ENCODE measurements at regions of chr2 and their contacts with region 1.

Region 1: DNA sequence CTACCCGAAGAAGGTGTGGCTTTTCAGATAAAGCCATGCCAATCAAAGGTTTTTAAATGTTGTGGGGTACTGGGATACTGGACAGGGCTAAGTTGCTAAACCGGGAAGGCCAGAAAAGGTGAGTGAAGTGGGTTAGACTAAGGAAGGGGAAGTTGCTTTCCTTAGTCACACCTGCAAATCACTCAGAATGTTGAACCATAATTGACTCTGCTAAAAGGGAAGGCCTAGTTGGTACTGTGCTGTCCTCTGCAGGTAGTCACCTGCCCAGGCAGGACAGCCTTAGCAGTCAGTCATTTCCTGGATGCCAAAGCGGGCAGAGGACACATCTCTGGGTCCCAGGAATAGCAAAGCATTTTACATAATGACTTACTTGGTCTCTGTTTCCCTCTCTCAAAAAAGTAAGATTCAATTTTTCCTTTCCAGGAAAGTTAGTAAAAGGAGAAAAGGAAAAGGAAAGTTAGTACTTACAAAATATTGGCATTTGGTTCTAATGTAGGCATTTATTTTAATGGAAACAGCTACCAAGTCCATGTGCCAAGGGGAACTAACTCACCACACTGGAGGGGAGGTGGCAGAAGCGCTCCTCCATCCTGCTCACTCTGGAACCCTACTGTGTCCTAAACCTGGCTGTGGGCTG is 60.3 kb downstream of the RFTN2 start:
- DNase-seq: no peak
- H3K4me3 ChIP-seq: no peak overlapping the region
- H3K27ac ChIP-seq: peak overlapping the region; percentile 17
- H3K4me1 ChIP-seq: peaks cover 16% of the 10 kb centered on the region
- H3K27me3 ChIP-seq: no peaks in the 10 kb centered on the region
- CTCF ChIP-seq: no peak
- POLR2A ChIP-seq: no peak

Region 2: GRCh38 chr2:197515739-197516392 is 99.3 kb before region 1 on chr2 and contains the start of gene MOB4:
- intact Hi-C with region 1: no loop called
- DNase-seq: peak in 1 of 2 donors; percentile 94
- H3K4me3 ChIP-seq: peak within 1 kb of the TSS; percentile 76 to 91
- H3K27ac ChIP-seq: peak within 1 kb of the TSS; percentile 93
- H3K4me1 ChIP-seq: peaks cover 33% of the 10 kb centered on the region
- H3K27me3 ChIP-seq: no peaks in the 10 kb centered on the region
- CTCF ChIP-seq: no peak
- POLR2A ChIP-seq: peak; percentile 80 to 88
- total RNA-seq, gene MOB4: 24.3 TPM

Region 3: GRCh38 chr2:197647961-197648690 is 33.0 kb after region 1 on chr2:
- intact Hi-C with region 1: loop called (anchors 2 kb)
- DNase-seq: no peak
- H3K4me3 ChIP-seq: no peak overlapping the region
- H3K27ac ChIP-seq: no peak overlapping the region
- H3K4me1 ChIP-seq: no peaks in the 10 kb centered on the region
- H3K27me3 ChIP-seq: no peaks in the 10 kb centered on the region
- CTCF ChIP-seq: no peak
- POLR2A ChIP-seq: no peak

Region 4: GRCh38 chr2:197675711-197676188 is 60.6 kb after region 1 on chr2:
- intact Hi-C with region 1: no loop called
- DNase-seq: no peak
- H3K4me3 ChIP-seq: peak overlapping the region; percentile 35 to 48
- H3K27ac ChIP-seq: peak overlapping the region; percentile 86
- H3K4me1 ChIP-seq: peaks cover 16% of the 10 kb centered on the region
- H3K27me3 ChIP-seq: no peaks in the 10 kb centered on the region
- CTCF ChIP-seq: no peak
- POLR2A ChIP-seq: no peak

Region 5: GRCh38 chr2:197740200-197740599 is 125.1 kb after region 1 on chr2:
- intact Hi-C with region 1: no loop called
- DNase-seq: no peak
- H3K4me3 ChIP-seq: no peak overlapping the region
- H3K27ac ChIP-seq: no peak overlapping the region
- H3K4me1 ChIP-seq: no peaks in the 10 kb centered on the region
- H3K27me3 ChIP-seq: no peaks in the 10 kb centered on the region
- CTCF ChIP-seq: no peak
- POLR2A ChIP-seq: no peak

Measured in vagina (tissue), 2 donors.